GM12878 (cell line): ENCODE measurements at regions of chr5 and their contacts with region 1.

Region 1: DNA sequence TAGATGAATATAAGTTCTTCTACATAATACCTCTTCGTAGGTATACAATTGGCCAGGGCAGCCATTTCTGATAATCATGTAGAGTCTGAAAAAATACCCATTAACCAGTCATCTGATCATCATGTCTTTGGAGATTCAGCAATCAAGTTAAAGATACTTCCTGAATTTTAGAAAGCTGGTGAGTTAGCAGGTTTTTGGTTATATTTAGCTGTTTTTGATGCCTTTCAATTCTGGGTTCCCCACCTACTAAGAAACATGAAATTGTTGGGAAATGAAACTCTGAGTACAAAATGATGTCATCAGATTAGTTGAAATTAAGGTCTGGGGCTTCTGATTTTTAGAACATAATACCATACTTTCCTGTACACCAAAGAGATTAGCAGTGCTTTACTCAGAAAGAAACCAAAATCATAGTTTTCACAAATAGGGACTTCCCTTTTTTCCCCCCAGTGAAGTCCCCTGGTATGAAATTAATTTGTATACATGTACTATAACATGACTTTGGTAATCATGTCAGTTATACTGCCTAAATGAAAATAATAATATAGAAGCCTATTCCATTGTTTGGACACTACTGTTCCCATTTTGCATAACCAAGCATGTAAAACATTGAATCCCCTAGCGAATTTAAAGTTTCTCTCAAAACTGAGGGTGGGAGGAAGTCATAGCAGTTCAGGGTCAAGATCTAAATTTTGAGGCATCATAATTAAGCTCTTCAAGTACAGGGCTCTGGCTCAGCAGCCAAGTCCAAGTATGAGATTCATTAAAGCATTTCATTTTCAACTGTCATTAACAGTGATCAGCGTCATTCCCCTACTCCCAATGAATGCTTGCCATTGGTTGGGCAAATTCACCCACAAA is 17.9 kb downstream of the PRLR start:
- DNase-seq: peak; percentile 71
- ATAC-seq: peak; percentile 85
- H3K4me3 ChIP-seq: no peak overlapping the region
- H3K27ac ChIP-seq: peak overlapping the region; percentile 22; the same call in 1 of the 2 replicates
- H3K4me1 ChIP-seq: peaks cover 12% of the 10 kb centered on the region; the same call in 1 of the 2 replicates
- H3K27me3 ChIP-seq: no peaks in the 10 kb centered on the region
- CTCF ChIP-seq: no peak
- EP300 ChIP-seq: peak; percentile 61 to 71; a peak in 2 of 4 replicates
- POLR2A ChIP-seq: no peak
- RAD21 ChIP-seq: no peak

Region 2: DNA sequence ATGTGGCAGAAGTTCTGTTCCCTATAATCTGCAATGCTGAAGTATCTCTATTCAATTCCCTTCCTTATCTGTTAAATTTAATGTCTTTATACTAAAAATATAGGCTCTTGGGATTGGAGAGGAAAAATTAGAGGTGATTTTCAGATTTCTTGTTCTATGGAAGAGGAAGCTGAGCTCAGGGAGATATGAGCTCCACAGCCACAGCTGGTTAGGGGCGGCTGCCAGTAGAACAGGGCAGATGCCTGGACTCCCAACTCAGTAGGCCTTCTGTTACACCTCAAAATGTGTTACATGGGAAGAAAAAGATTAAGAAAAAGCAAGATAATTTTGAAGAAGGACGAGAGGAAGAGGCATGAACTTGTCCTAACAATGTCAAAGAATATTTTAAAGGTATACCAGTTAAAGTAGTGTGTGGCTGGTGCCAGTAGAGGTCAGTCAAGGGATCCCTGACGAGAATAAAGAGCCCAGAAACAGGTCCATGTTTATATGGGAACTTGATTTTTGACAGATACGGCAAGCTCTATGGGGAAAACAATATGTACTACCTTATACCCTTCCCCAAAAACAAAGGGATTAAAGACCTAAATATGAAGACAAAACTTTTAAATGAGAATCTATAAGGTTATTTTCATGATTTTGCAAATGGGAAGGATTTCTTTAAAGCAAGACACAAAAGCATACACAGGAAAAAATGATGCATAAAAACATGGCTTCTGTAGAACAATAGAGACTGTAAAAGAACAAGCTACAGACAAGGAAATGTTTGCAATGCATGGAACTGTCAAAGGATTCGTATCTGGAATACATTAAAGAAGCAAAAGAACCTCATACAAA is 254.3 kb before region 1 on chr5:
- CTCF ChIA-PET with region 1: no interaction called
- POLR2A ChIA-PET with region 1: interaction called, 10 read pairs
- RAD21 ChIA-PET with region 1: interaction called, 3 read pairs
- SMC1A ChIA-PET with region 1: interaction called, 4 read pairs
- in situ Hi-C with region 1: no loop called
- intact Hi-C with region 1: no loop called
- DNase-seq: no peak
- ATAC-seq: peak; percentile 90
- H3K4me3 ChIP-seq: no peak overlapping the region
- H3K27ac ChIP-seq: no peak overlapping the region
- H3K4me1 ChIP-seq: peaks cover 11% of the 10 kb centered on the region; the same call in 1 of the 2 replicates
- H3K27me3 ChIP-seq: no peaks in the 10 kb centered on the region
- CTCF ChIP-seq: peak; percentile 59 to 72 (median 70)
- EP300 ChIP-seq: no peak
- POLR2A ChIP-seq: no peak
- RAD21 ChIP-seq: peak; percentile 49

Region 3: GRCh38 chr5:35096216-35096615 is 116.1 kb before region 1 on chr5:
- CTCF ChIA-PET with region 1: interaction called, 32 read pairs
- POLR2A ChIA-PET with region 1: interaction called, 6 read pairs
- RAD21 ChIA-PET with region 1: interaction called, 11 read pairs
- SMC1A ChIA-PET with region 1: interaction called, 11 read pairs
- in situ Hi-C with region 1: no loop called
- intact Hi-C with region 1: no loop called
- DNase-seq: no peak
- ATAC-seq: peak; percentile 12; the same call in 2 of the 3 replicates
- H3K4me3 ChIP-seq: no peak overlapping the region
- H3K27ac ChIP-seq: no peak overlapping the region
- H3K4me1 ChIP-seq: no peaks in the 10 kb centered on the region
- H3K27me3 ChIP-seq: no peaks in the 10 kb centered on the region
- CTCF ChIP-seq: no peak
- EP300 ChIP-seq: no peak
- POLR2A ChIP-seq: no peak
- RAD21 ChIP-seq: no peak

Region 4: GRCh38 chr5:35194635-35195471 is 17.5 kb before region 1 on chr5:
- CTCF ChIA-PET with region 1: interaction called, 7 read pairs
- POLR2A ChIA-PET with region 1: interaction called, 6 read pairs
- RAD21 ChIA-PET with region 1: interaction called, 18 read pairs
- SMC1A ChIA-PET with region 1: interaction called, 40 read pairs
- in situ Hi-C with region 1: no loop called
- intact Hi-C with region 1: no loop called
- DNase-seq: peak; percentile 36
- ATAC-seq: peak; percentile 96
- H3K4me3 ChIP-seq: peak overlapping the region; percentile 20; the same call in 1 of the 2 replicates
- H3K27ac ChIP-seq: peak overlapping the region; percentile 30; the same call in 1 of the 2 replicates
- H3K4me1 ChIP-seq: peaks cover 15% of the 10 kb centered on the region
- H3K27me3 ChIP-seq: no peaks in the 10 kb centered on the region
- CTCF ChIP-seq: no peak
- EP300 ChIP-seq: peak in 1 of 2 experiments; percentile 79; a peak in 2 of 4 replicates
- POLR2A ChIP-seq: no peak
- RAD21 ChIP-seq: no peak

Region 5: DNA sequence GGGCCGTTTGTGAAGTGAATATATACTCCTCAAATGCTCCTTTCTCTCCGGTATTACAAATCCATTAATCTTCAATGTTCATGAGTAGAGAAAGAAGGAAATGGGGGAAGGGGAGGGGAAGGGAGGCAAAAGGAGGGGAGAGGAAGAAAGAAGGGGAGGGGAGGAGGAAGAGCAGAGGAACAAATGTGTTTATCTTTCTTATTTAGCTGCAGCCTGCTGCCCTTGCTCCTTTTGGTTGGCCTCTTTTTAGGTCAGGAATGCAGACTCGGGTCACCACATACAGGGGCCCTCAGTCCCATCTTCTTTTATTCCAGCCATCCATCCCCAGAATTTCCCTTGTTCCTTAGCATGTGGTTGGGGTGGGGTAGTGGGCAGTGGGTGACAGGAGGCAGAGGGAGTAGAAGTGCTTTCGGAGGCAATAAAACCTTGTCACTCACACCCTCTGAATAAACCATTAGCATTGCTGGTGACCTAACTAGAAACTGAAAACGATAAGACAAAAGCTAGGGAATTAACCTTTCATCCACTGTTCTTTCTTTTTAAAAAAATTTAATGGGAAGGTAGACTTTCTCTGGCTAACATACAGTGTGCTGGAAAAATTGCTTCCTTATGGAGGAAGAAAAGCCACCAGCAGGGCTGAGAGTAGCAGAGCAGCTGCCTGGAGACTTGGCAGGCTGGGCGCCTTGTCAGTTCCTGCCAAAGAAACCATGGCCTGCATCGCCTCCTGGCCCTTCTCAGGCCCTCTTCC is 34.7 kb after region 1 on chr5:
- CTCF ChIA-PET with region 1: interaction called, 5 read pairs
- POLR2A ChIA-PET with region 1: interaction called, 3 read pairs
- RAD21 ChIA-PET with region 1: interaction called, 7 read pairs
- SMC1A ChIA-PET with region 1: interaction called, 11 read pairs
- in situ Hi-C with region 1: no loop called
- intact Hi-C with region 1: no loop called
- DNase-seq: no peak
- ATAC-seq: peak; percentile 75
- H3K4me3 ChIP-seq: no peak overlapping the region
- H3K27ac ChIP-seq: no peak overlapping the region; the same call in 1 of the 2 replicates
- H3K4me1 ChIP-seq: no peaks in the 10 kb centered on the region
- H3K27me3 ChIP-seq: no peaks in the 10 kb centered on the region
- CTCF ChIP-seq: no peak
- EP300 ChIP-seq: peak in 1 of 2 experiments; percentile 13; a peak in 1 of 4 replicates
- POLR2A ChIP-seq: no peak
- RAD21 ChIP-seq: no peak